ENCODE measurements at regions of chr9 and their contacts with region 1.

Region 1: DNA sequence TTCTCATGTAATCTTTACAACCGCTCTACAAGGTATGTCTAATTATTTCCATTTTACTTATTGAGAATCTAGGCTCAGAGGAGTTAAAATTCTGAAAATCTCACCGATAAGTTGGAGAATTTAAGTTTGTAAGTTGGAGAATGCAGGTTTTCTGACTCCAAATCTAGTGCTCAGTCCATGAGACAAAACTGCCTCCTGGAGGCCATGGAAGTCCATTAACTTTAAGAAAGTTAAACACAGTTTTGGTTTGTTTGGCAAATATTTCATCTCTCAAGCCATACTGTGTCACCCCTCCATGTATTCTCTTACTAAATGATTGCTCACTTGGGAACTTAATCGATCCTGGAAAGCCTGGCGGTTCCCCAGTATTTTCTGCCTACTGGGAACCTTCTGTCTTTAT is 52.6 kb downstream of the INIP start:
- DNase-seq: peak; percentile 47
- ATAC-seq: no peak
- H3K4me3 ChIP-seq: no peak overlapping the region
- H3K27ac ChIP-seq: no peak overlapping the region
- H3K4me1 ChIP-seq: no peaks in the 10 kb centered on the region
- H3K27me3 ChIP-seq: no peaks in the 10 kb centered on the region; the same call in 1 of the 2 replicates
- CTCF ChIP-seq: peak; percentile 49
- POLR2A ChIP-seq: no peak
- RAD21 ChIP-seq: peak; percentile 67

Region 2: DNA sequence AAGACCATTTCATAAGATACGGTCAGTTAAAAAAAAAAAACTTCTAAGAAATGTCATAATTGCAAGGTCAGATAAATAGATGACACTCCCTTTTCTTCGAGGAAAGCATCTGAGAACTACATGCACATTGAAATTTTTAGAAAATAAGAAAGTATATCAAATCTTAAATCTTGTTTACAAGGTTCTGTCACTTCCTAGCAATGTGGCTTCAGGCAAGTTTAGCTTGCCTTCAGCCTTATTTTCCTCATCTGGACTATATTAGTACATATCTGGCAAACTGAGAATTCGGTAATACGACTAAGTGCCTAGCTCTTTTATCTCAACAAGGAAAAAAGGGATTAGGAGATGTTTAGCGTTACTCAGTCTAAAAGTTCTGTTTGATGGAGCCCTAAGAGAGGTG is 1302.8 kb before region 1 on chr9:
- CTCF ChIA-PET with region 1: no interaction called
- POLR2A ChIA-PET with region 1: no interaction called
- dilution Hi-C with region 1: no loop called
- in situ Hi-C with region 1: no loop called
- intact Hi-C with region 1: no loop called
- DNase-seq: no peak
- ATAC-seq: no peak
- H3K4me3 ChIP-seq: no peak overlapping the region
- H3K27ac ChIP-seq: no peak overlapping the region
- H3K4me1 ChIP-seq: no peaks in the 10 kb centered on the region
- H3K27me3 ChIP-seq: no peaks in the 10 kb centered on the region
- CTCF ChIP-seq: no peak
- POLR2A ChIP-seq: no peak
- RAD21 ChIP-seq: no peak

Region 3: DNA sequence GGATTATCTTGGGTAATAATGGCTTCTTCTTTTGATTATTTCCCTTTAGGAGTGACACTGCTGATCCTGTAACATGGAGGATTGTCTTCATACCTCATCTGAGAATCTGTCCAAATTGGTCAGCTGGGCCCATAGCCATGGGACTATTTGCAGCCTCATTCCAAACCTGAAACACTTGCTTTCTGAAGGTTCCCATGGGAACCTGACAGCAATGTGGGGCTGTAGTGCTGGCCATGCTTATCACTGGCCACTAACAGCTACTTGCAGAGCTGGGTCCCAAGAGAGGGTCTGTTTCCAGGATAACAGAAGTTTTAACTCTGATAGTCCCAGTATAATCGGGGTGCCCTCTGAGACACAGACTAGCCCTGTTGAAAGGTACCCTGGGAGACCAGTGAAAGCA is 91.3 kb before region 1 on chr9:
- CTCF ChIA-PET with region 1: no interaction called
- POLR2A ChIA-PET with region 1: no interaction called
- dilution Hi-C with region 1: no loop called
- in situ Hi-C with region 1: no loop called
- intact Hi-C with region 1: no loop called
- DNase-seq: no peak
- ATAC-seq: no peak
- H3K4me3 ChIP-seq: no peak overlapping the region
- H3K27ac ChIP-seq: no peak overlapping the region
- H3K4me1 ChIP-seq: 0 out of 2 replicates have a peak, but pooled peaks cover 2% of the 10 kb centered on the region
- H3K27me3 ChIP-seq: no peaks in the 10 kb centered on the region
- CTCF ChIP-seq: no peak
- POLR2A ChIP-seq: no peak
- RAD21 ChIP-seq: no peak

Region 4: GRCh38 chr9:112997236-112997941 is 332.0 kb after region 1 on chr9:
- CTCF ChIA-PET with region 1: no interaction called
- POLR2A ChIA-PET with region 1: no interaction called
- dilution Hi-C with region 1: no loop called
- in situ Hi-C with region 1: no loop called
- intact Hi-C with region 1: loop called (anchors 5 kb)
- DNase-seq: no peak
- ATAC-seq: no peak
- H3K4me3 ChIP-seq: no peak overlapping the region
- H3K27ac ChIP-seq: no peak overlapping the region
- H3K4me1 ChIP-seq: no peaks in the 10 kb centered on the region
- H3K27me3 ChIP-seq: no peaks in the 10 kb centered on the region
- CTCF ChIP-seq: no peak
- POLR2A ChIP-seq: no peak
- RAD21 ChIP-seq: no peak